Panc1 (cell line): ENCODE measurements at regions of chr5 and their contacts with region 1.

Region 1: DNA sequence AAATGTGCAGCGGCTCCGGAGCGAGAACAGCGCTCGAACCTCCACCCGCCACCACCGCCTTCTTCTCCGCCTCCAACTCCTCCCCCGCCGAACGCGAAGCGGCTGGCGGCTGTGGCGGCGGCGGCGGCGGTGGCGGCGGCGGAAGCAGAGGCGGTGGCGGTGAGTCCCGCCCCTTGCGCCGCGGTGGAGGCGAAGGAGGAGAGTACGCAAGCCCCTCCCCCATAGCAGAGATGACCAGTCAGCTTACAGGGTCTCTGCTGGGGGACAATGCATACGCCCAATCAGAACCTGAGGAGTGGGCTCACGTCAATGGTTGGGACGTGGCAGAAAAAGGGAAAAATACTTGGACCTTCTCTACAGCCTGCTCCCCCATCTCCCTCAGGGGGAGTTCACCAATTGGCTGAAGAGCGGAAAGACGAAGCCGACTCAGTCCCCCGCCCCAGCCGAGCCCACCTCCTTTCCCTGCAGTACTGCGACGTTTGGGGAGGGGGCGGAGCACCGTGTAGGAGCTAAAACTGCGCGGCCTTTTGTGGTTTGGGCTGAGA is at the start of gene PJA2:
- DNase-seq: peak; percentile 99
- ATAC-seq: peak; percentile 94
- H3K4me3 ChIP-seq: peak within 1 kb of the TSS; percentile 81 to 82
- H3K27ac ChIP-seq: peak within 1 kb of the TSS; percentile 87
- H3K4me1 ChIP-seq: peaks cover 29% of the 10 kb centered on the region
- H3K27me3 ChIP-seq: no peaks in the 10 kb centered on the region
- CTCF ChIP-seq: no peak
- total RNA-seq, gene PJA2: 33.6 TPM

Region 2: GRCh38 chr5:108997720-108998119 is 412.2 kb before region 1 on chr5:
- CTCF ChIA-PET with region 1: no interaction called
- POLR2A ChIA-PET with region 1: interaction called, 11 read pairs
- in situ Hi-C with region 1: no loop called
- intact Hi-C with region 1: no loop called
- DNase-seq: no peak
- ATAC-seq: no peak; the same call in 1 of the 2 replicates
- H3K4me3 ChIP-seq: no peak overlapping the region
- H3K27ac ChIP-seq: no peak overlapping the region
- H3K4me1 ChIP-seq: no peaks in the 10 kb centered on the region
- H3K27me3 ChIP-seq: no peaks in the 10 kb centered on the region
- CTCF ChIP-seq: no peak